Sigmoid colon (tissue), 7 donors: ENCODE measurements at regions of chr4 and their contacts with region 1.

Region 1: GRCh38 chr4:118898684-118899138 is 10.1 kb downstream of the SYNPO2 start:
- DNase-seq: peak; percentile 81
- H3K4me3 ChIP-seq: peak overlapping the region in 1 of 4 donors; percentile 8
- H3K27ac ChIP-seq: peak overlapping the region; percentile 83 to 90 (median 90)
- H3K4me1 ChIP-seq: peaks cover 0 to 98% (median 67%) of the 10 kb centered on the region in 4 donors
- H3K27me3 ChIP-seq: no peaks in the 10 kb centered on the region
- CTCF ChIP-seq: no peak
- EP300 ChIP-seq: no peak
- POLR2A ChIP-seq: no peak

Region 2: DNA sequence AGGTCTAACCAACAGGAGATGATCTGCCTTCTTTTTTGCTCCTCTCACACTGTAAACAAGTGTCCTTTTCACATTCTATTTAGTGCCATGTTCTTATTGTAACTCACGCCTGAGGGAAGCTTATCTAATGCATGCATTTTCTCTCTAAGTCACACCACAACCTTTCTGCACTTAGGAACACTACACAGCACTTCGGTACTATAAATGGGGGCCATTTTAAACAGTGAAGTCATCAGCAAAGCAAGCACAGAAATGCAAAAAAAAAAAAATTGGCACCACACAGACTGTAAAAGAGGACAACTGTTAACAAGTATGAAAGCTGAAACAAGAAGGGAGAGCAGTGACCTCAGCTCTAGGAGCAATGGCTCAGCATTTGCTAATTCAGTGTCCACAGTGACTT is 591.1 kb before region 1 on chr4:
- intact Hi-C with region 1: no loop called
- DNase-seq: no peak
- H3K4me3 ChIP-seq: no peak overlapping the region
- H3K27ac ChIP-seq: no peak overlapping the region
- H3K4me1 ChIP-seq: no peaks in the 10 kb centered on the region
- H3K27me3 ChIP-seq: no peaks in the 10 kb centered on the region
- CTCF ChIP-seq: no peak
- EP300 ChIP-seq: no peak
- POLR2A ChIP-seq: no peak

Region 3: DNA sequence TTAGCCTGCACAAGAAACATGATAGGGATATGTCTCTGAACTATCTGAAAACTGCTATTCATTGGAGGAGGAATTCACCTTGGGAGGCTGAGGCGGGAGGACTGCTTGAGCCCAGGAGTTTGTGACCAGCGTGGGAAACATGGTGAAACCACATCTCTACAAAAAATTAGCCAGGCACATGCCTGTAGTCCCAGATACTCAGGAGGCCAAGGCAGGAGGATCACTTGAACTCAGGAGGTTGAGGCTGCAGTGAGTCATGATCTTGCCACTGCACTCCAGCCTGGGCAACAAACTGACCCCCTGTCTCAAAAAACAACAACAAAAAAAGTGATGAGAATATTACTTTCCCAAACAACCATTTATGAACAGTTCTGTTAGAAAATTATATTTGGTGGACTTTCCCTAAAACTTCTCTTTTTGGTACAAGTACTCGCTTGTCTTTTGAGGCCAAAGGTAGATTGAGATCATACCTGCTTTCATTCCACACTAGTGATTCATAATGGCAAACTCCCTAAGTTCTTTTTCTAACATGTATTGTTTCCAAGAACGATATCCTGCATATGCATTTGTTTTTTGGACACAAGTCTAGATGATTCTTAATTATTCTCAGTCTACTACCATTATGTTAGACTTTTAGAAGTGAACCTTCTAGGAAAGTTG is 180.1 kb before region 1 on chr4:
- intact Hi-C with region 1: no loop called
- DNase-seq: no peak
- H3K4me3 ChIP-seq: no peak overlapping the region
- H3K27ac ChIP-seq: no peak overlapping the region
- H3K4me1 ChIP-seq: no peaks in the 10 kb centered on the region
- H3K27me3 ChIP-seq: no peaks in the 10 kb centered on the region
- CTCF ChIP-seq: no peak
- EP300 ChIP-seq: no peak
- POLR2A ChIP-seq: no peak

Region 4: DNA sequence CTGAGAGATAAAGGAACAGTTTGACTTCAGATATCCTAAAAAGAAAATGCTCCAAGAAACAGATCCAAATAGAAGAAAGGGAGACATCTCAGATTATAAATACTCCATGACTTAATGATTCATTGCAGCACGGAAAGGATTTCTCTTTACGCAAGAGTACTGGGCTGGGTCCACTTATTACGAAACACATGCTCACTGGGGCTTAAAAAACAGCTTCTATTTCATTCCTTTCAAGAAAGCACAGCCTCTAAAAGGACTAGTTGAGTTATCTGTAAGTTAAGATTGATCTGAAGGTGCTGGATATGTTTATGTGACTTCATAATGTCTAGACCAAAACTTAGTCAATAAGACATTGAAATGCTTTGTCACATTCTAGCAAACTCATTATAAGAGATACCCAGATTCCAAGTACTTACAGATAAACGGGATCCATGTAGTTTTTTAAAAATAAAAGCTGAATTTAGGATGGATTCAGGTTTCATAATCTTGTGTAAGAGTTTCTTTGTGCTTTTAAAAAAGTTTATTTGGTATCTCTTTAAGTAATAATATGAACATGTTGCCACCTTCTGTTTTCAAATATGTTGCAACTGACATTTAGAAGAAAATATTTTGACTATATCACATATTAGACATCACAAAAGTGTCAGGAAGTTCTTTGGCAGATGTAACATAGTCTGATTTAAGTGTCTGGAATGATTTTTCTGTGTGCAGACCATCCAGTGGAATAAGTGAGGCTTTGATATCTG is 127.4 kb after region 1 on chr4:
- intact Hi-C with region 1: loop called (anchors 5 kb)
- DNase-seq: peak; percentile 89
- H3K4me3 ChIP-seq: peak overlapping the region; percentile 39 to 55 (median 50)
- H3K27ac ChIP-seq: peak overlapping the region; percentile 84 to 98 (median 94)
- H3K4me1 ChIP-seq: peaks cover 0 to 38% (median 24%) of the 10 kb centered on the region in 4 donors
- H3K27me3 ChIP-seq: no peaks in the 10 kb centered on the region
- CTCF ChIP-seq: no peak
- EP300 ChIP-seq: peak; percentile 84 to 98 (median 90)
- POLR2A ChIP-seq: peak in 1 of 2 donors; percentile 29

Region 5: GRCh38 chr4:119559044-119559647 is 660.4 kb after region 1 on chr4:
- intact Hi-C with region 1: no loop called
- DNase-seq: no peak
- H3K4me3 ChIP-seq: no peak overlapping the region
- H3K27ac ChIP-seq: peak overlapping the region in 2 of 4 donors; percentile 38 to 40
- H3K4me1 ChIP-seq: peaks cover 0 to 15% (median 6%) of the 10 kb centered on the region in 4 donors
- H3K27me3 ChIP-seq: no peaks in the 10 kb centered on the region
- CTCF ChIP-seq: peak; percentile 35 to 61 (median 40)
- EP300 ChIP-seq: no peak
- POLR2A ChIP-seq: no peak